ENCODE measurements at regions of chr2 and their contacts with region 1.

Region 1: DNA sequence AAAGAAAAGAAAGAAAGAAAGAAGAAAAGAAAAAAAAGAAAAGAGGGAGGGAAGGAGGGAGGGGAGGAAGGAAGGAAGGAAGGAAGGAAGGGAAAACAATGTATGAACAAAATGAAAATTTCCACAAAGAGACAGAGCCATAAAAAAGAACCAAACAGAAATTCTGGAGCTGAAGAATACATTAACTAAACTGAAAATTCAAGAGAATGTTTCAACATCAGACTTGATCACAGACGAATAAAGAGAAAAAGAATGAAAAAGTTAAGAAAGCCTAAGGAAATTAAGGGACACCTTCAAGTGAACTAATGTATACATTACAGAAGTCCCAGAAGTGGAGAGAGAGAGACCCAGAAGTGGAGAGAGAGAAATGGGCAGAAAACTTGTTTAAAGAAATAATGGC is 60.9 kb upstream of the RAB6C start:
- DNase-seq: no peak
- H3K4me3 ChIP-seq: no peak overlapping the region
- H3K27ac ChIP-seq: no peak overlapping the region
- H3K27me3 ChIP-seq: peaks cover 2% of the 10 kb centered on the region
- CTCF ChIP-seq: no peak

Region 2: GRCh38 chr2:129877289-129877779 is 41.3 kb before region 1 on chr2:
- CTCF ChIA-PET with region 1: interaction called, 10 read pairs
- POLR2A ChIA-PET with region 1: no interaction called
- DNase-seq: peak; percentile 27
- H3K4me3 ChIP-seq: peak overlapping the region; percentile 72
- H3K27ac ChIP-seq: no peak overlapping the region
- H3K27me3 ChIP-seq: no peaks in the 10 kb centered on the region
- CTCF ChIP-seq: no peak

Measured in AG04450 (cell line).